ENCODE measurements at regions of chr19 and their contacts with region 1.

Region 1: DNA sequence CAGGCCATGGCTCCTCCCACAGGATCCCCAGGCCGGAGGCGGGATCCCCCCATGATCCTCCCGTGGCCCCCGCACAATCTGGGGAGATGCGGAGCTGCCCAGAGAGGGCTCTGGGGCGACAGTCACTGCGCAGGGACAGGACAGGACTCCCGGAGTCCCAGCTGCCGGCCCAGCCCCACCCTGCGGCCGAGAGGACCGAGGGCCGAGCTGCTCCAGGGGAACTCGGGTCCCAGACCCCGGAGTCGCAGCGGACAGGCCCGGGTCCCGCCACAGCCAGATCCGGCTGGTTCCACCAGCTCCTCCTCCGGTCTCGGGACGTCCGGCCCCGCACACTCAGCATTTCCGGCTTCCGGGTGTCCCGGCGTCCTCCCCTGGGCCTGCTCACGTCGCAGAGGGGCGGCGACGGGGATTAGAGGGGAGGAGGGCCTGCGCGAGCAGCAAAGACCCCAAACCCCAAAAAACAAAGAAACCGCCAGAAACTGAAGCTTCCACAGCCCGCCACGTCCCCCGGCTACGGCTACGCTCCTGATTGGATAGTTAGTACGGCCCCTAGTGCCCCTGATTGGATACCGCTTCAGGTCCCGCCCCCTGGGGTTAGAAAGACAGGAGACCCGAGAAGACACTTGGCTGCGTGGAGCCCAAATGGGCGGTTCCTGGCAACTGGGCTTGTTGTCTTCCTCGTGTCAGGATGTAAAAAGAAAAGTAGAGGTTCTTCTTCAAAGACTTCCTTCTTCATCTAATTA is 21.3 kb upstream of the OR10H1 start:
- DNase-seq: peak; percentile 96
- ATAC-seq: peak; percentile 96
- H3K4me3 Mint-ChIP-seq: peak overlapping the region; percentile 85
- H3K27ac Mint-ChIP-seq: peak overlapping the region; percentile 98
- H3K4me1 Mint-ChIP-seq: peaks cover 15% of the 10 kb centered on the region
- H3K27me3 Mint-ChIP-seq: no peaks in the 10 kb centered on the region

Region 2: DNA sequence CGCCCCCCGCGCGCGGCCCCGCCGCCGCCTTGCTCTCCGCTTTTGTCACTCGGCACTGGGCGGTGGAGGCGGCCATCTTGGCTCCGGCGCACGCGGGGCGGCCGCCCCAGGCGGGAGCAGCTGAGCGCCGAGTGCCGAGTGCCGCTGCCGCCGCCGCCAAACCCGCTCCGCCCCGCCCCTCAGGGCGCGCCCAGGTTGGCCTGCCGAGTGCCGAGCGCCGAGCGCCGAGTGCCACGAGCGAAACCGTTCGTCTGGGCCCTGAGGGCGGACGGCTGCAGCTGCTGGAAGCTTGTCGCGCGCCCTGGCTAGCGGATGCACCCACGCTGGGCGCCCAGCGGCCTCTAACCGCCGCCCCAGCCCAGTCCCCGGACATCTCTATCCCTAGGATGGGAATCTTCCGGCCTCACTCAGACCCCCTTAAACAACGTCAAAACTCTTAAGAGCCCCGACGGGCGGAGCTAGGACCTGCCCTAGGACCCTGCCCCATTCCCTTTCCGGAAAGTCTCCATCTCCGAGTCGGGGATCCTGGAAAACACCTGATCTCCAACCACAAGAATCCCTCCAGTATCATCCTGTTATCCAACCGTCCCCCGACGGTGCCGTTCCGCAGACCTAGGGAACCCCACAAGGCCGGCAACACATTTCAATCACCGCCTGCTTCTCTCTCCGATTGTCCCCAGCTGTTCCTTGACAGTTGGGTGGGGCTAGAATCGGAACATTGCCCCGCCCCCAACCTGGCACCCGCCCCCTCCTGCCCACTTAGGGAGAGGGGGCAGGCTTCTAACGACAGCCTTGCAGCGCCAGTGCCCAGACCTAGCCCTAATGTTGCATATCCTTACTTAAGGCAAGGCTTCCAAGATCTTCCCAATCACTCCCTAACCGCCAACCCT is 403.9 kb before region 1 on chr19:
- CTCF ChIA-PET with region 1: no interaction called
- POLR2A ChIA-PET with region 1: no interaction called
- intact Hi-C with region 1: loop called in 1 of 2 experiments (anchors 2 kb)
- DNase-seq: peak; percentile 97
- ATAC-seq: peak; percentile 87
- H3K4me3 Mint-ChIP-seq: peak overlapping the region; percentile 87
- H3K27ac Mint-ChIP-seq: peak overlapping the region; percentile 91
- H3K4me1 Mint-ChIP-seq: peaks cover 26% of the 10 kb centered on the region
- H3K27me3 Mint-ChIP-seq: no peaks in the 10 kb centered on the region

Region 3: DNA sequence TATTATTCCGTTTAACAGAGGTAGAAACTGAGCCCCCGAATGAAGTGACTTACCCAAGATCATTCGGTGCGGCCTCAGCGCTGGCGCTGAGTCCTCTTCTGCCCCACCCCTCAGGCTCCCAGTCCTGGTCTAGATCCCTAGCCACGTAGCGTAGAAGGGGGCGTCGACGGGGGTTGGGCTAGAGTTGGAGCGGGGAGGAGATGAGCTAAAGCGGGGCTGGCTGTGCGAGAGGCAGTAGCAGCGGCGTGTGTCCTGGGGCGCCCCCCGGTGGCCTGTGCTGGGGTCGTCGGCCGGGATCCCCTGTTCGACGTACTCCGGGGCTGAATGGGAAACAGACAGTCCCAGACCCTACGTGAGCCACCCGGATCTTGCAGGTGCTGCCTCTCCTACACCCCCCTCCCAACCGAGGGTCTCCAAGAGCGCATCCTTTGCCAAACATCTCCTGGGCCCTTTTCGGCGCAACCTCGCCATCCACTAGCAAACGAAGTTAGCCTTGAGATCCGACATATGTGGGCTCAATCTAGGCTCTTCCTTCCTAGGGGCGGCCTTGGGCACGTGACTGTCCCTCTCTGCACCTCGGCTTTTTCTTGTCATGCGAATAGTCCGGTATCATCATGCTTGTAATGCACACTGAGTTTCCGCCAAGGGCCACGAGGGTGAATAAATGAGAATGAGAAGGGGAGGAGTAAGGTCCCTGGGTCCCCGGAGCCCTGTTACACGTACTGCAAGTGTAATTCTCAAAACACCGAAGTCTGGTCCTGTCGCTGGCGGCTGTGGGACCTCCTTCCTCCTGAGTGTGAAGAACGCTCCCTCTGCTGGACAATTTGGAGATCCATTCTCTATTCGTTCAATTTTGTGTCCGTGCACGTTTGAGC is 280.8 kb before region 1 on chr19:
- CTCF ChIA-PET with region 1: no interaction called
- POLR2A ChIA-PET with region 1: no interaction called
- intact Hi-C with region 1: no loop called
- DNase-seq: peak; percentile 99
- ATAC-seq: peak; percentile 86
- H3K4me3 Mint-ChIP-seq: peak overlapping the region; percentile 73
- H3K27ac Mint-ChIP-seq: peak overlapping the region; percentile 85
- H3K4me1 Mint-ChIP-seq: peaks cover 18% of the 10 kb centered on the region
- H3K27me3 Mint-ChIP-seq: peaks cover 2% of the 10 kb centered on the region

Region 4: GRCh38 chr19:15911599-15912235 is 75.0 kb after region 1 on chr19:
- CTCF ChIA-PET with region 1: no interaction called
- POLR2A ChIA-PET with region 1: no interaction called
- intact Hi-C with region 1: no loop called
- DNase-seq: no peak
- ATAC-seq: no peak
- H3K4me3 Mint-ChIP-seq: no peak overlapping the region
- H3K27ac Mint-ChIP-seq: no peak overlapping the region
- H3K4me1 Mint-ChIP-seq: peaks cover 3% of the 10 kb centered on the region
- H3K27me3 Mint-ChIP-seq: peaks cover 30% of the 10 kb centered on the region

Region 5: GRCh38 chr19:16070366-16070990 is 233.7 kb after region 1 on chr19:
- CTCF ChIA-PET with region 1: no interaction called
- POLR2A ChIA-PET with region 1: no interaction called
- intact Hi-C with region 1: loop called in 1 of 2 experiments (anchors 2 kb)
- DNase-seq: peak; percentile 92
- ATAC-seq: peak; percentile 97
- H3K4me3 Mint-ChIP-seq: no peak overlapping the region
- H3K27ac Mint-ChIP-seq: no peak overlapping the region
- H3K4me1 Mint-ChIP-seq: peaks cover 42% of the 10 kb centered on the region
- H3K27me3 Mint-ChIP-seq: no peaks in the 10 kb centered on the region

Region 6: DNA sequence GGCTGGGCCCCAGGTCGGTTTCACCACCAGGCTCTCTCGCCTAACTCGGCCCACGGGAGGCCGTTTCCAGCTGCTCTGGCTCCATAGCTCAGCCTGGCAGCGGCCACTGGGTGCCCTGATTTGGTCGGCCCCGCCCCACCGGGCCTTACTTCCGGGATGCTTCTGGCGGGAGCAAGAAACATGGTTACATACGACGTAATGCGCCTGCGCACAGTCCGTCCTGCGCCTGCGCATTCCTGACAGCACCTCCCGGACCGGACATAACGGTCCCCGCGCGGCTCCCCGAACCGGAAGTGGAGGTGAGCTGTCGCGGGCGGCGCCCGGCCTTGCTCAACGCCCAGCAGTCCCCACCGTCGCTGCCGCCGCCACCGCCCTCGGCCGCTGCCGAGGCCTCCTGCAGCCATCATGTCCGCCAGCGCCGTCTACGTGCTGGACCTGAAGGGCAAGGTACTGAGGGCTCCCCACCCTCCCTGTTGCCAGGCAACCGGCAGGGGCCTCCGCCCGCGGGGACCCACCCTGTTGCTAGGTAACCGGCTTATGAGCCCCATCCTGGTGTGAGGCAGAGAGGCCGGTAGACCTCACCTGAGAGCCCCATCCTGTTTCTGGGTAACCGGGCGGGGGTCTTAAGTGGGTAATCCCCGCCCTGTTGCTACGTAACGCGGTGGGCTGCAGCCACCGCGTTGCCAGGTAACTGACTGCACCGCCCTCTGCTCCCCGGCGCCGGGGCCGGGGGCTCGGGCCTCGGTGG is 361.0 kb after region 1 on chr19 and contains the start of gene AP1M1:
- CTCF ChIA-PET with region 1: no interaction called
- POLR2A ChIA-PET with region 1: no interaction called
- intact Hi-C with region 1: loop called in 1 of 2 experiments (anchors 2 kb)
- DNase-seq: peak; percentile 99
- ATAC-seq: peak; percentile 95
- H3K4me3 Mint-ChIP-seq: peak within 1 kb of the TSS; percentile 83
- H3K27ac Mint-ChIP-seq: peak within 1 kb of the TSS; percentile 96
- H3K4me1 Mint-ChIP-seq: peaks cover 33% of the 10 kb centered on the region
- H3K27me3 Mint-ChIP-seq: no peaks in the 10 kb centered on the region
- total RNA-seq, gene AP1M1: 61.8 to 92.0 TPM

Region 7: GRCh38 chr19:16628183-16628983 is 791.6 kb after region 1 on chr19 and contains the start of gene MED26:
- CTCF ChIA-PET with region 1: no interaction called
- POLR2A ChIA-PET with region 1: no interaction called
- intact Hi-C with region 1: loop called in 1 of 2 experiments (anchors 1 kb)
- DNase-seq: peak; percentile 98
- ATAC-seq: peak; percentile 92
- H3K4me3 Mint-ChIP-seq: peak within 1 kb of the TSS; percentile 87
- H3K27ac Mint-ChIP-seq: peak within 1 kb of the TSS; percentile 100
- H3K4me1 Mint-ChIP-seq: peaks cover 39% of the 10 kb centered on the region
- H3K27me3 Mint-ChIP-seq: no peaks in the 10 kb centered on the region
- total RNA-seq, gene MED26: 13.6 to 14.5 TPM

Measured in activated CD4-positive, alpha-beta T cell treated with anti-CD3 and anti-CD28 coated beads for 36 hours (primary cell).